CD4-positive, alpha-beta T cell (primary cell): ENCODE measurements at regions of chr17 and their contacts with region 1.

Region 1: GRCh38 chr17:67376737-67377487 is at the start of gene PITPNC1:
- DNase-seq: peak; percentile 77 to 95 (median 84)
- ATAC-seq: peak; percentile 71
- H3K4me3 ChIP-seq: peak within 1 kb of the TSS; percentile 99
- H3K4me3 Mint-ChIP-seq: peak within 1 kb of the TSS; percentile 97
- H3K27ac ChIP-seq: peak within 1 kb of the TSS; percentile 76 to 95
- H3K27ac Mint-ChIP-seq: peak within 1 kb of the TSS; percentile 86
- H3K4me1 ChIP-seq: peaks cover 49% of the 10 kb centered on the region
- H3K4me1 Mint-ChIP-seq: peaks cover 41% of the 10 kb centered on the region
- H3K27me3 ChIP-seq: no peaks in the 10 kb centered on the region
- H3K27me3 Mint-ChIP-seq: no peaks in the 10 kb centered on the region
- CTCF ChIP-seq: no peak
- total RNA-seq, gene PITPNC1: 80.2 to 83.4 TPM

Region 2: GRCh38 chr17:67289181-67289876 is 87.6 kb before region 1 on chr17:
- CTCF ChIA-PET with region 1: no interaction called
- POLR2A ChIA-PET with region 1: no interaction called
- intact Hi-C with region 1: no loop called
- DNase-seq: no peak
- ATAC-seq: no peak
- H3K4me3 ChIP-seq: no peak overlapping the region
- H3K4me3 Mint-ChIP-seq: no peak overlapping the region
- H3K27ac ChIP-seq: no peak overlapping the region
- H3K27ac Mint-ChIP-seq: no peak overlapping the region
- H3K4me1 ChIP-seq: peaks cover 10% of the 10 kb centered on the region
- H3K4me1 Mint-ChIP-seq: no peaks in the 10 kb centered on the region
- H3K27me3 ChIP-seq: no peaks in the 10 kb centered on the region
- H3K27me3 Mint-ChIP-seq: no peaks in the 10 kb centered on the region
- CTCF ChIP-seq: no peak

Region 3: GRCh38 chr17:67322042-67322787 is 54.7 kb before region 1 on chr17:
- CTCF ChIA-PET with region 1: no interaction called
- POLR2A ChIA-PET with region 1: no interaction called
- intact Hi-C with region 1: no loop called
- DNase-seq: no peak
- ATAC-seq: no peak
- H3K4me3 ChIP-seq: no peak overlapping the region
- H3K4me3 Mint-ChIP-seq: no peak overlapping the region
- H3K27ac ChIP-seq: no peak overlapping the region
- H3K27ac Mint-ChIP-seq: no peak overlapping the region
- H3K4me1 ChIP-seq: no peaks in the 10 kb centered on the region
- H3K4me1 Mint-ChIP-seq: no peaks in the 10 kb centered on the region
- H3K27me3 ChIP-seq: no peaks in the 10 kb centered on the region
- H3K27me3 Mint-ChIP-seq: no peaks in the 10 kb centered on the region
- CTCF ChIP-seq: no peak

Region 4: GRCh38 chr17:67390646-67391384 is 13.9 kb after region 1 on chr17:
- CTCF ChIA-PET with region 1: interaction called, 16 read pairs
- POLR2A ChIA-PET with region 1: interaction called, 25 read pairs
- intact Hi-C with region 1: loop called in 1 of 2 experiments (anchors 1 kb)
- DNase-seq: peak; percentile 39 to 83 (median 60)
- ATAC-seq: peak; percentile 82
- H3K4me3 ChIP-seq: peak overlapping the region; percentile 20
- H3K4me3 Mint-ChIP-seq: peak overlapping the region; percentile 86
- H3K27ac ChIP-seq: peak overlapping the region; percentile 50 to 55
- H3K27ac Mint-ChIP-seq: peak overlapping the region; percentile 92
- H3K4me1 ChIP-seq: peaks cover 56% of the 10 kb centered on the region
- H3K4me1 Mint-ChIP-seq: peaks cover 78% of the 10 kb centered on the region
- H3K27me3 ChIP-seq: no peaks in the 10 kb centered on the region
- H3K27me3 Mint-ChIP-seq: no peaks in the 10 kb centered on the region
- CTCF ChIP-seq: no peak

Region 5: GRCh38 chr17:67431249-67432048 is 54.5 kb after region 1 on chr17:
- CTCF ChIA-PET with region 1: interaction called, 23 read pairs
- POLR2A ChIA-PET with region 1: interaction called, 39 read pairs
- intact Hi-C with region 1: loop called (anchors 2 to 5 kb)
- DNase-seq: peak in 3 of 14 experiments; percentile 41 to 56 (median 45)
- ATAC-seq: peak; percentile 5
- H3K4me3 ChIP-seq: no peak overlapping the region
- H3K4me3 Mint-ChIP-seq: peak overlapping the region; percentile 8
- H3K27ac ChIP-seq: no peak overlapping the region
- H3K27ac Mint-ChIP-seq: peak overlapping the region; percentile 91
- H3K4me1 ChIP-seq: peaks cover 59% of the 10 kb centered on the region
- H3K4me1 Mint-ChIP-seq: peaks cover 82% of the 10 kb centered on the region
- H3K27me3 ChIP-seq: no peaks in the 10 kb centered on the region
- H3K27me3 Mint-ChIP-seq: no peaks in the 10 kb centered on the region
- CTCF ChIP-seq: no peak

Region 6: DNA sequence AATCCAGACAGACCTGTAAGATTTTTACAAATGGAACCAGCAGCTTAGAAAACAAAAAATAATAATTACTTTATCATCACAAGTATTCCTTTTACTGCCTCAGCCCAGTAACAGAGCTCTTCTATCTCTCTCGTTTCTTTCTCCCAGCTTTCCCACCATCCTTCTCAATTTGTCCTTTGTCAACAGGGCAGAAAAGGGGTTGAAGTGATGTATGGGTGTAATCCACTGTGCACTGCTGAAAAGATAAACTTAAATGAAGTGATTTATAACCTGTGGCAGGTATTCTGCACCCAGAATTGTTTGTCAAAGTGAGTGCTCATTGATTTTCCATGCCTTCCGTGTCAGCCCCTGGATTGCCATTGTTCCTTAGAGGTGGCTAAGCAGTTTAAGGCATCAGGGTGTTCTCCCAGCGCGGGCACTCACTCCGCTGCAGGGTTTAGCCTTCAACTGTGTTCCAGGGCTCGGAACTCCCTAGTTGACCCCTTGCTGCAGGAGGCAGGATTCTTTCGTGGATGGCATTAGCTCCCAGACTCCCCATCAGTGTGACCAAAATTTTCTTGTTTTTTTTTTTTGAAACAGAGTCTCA is 83.1 kb after region 1 on chr17:
- CTCF ChIA-PET with region 1: interaction called, 8 read pairs
- POLR2A ChIA-PET with region 1: interaction called, 15 read pairs
- intact Hi-C with region 1: no loop called
- DNase-seq: no peak
- ATAC-seq: no peak
- H3K4me3 ChIP-seq: no peak overlapping the region
- H3K4me3 Mint-ChIP-seq: no peak overlapping the region
- H3K27ac ChIP-seq: no peak overlapping the region
- H3K27ac Mint-ChIP-seq: peak overlapping the region; percentile 60
- H3K4me1 ChIP-seq: peaks cover 55% of the 10 kb centered on the region
- H3K4me1 Mint-ChIP-seq: peaks cover 74% of the 10 kb centered on the region
- H3K27me3 ChIP-seq: no peaks in the 10 kb centered on the region
- H3K27me3 Mint-ChIP-seq: no peaks in the 10 kb centered on the region
- CTCF ChIP-seq: no peak

Region 7: DNA sequence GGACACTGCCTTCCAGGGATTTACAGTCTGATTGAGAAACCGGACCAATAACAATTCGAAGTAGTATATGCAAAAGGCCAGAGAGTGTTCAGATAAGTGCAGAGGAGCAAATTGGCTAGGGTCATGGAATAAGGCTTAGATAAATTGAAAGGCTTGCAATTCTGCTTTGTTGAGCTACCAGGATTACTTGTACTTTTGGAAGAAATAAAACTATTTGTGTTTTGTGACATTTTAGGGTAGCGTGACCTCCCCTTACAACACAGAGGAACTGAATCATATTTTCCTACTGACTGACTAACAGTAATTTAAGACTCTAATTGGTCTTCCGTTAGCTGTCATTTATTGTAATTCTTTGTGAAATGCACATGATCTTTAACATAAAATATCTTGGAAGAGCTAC is 104.9 kb after region 1 on chr17:
- CTCF ChIA-PET with region 1: interaction called, 187 read pairs
- POLR2A ChIA-PET with region 1: interaction called, 122 read pairs
- intact Hi-C with region 1: no loop called
- DNase-seq: peak in 1 of 14 experiments; percentile 42
- ATAC-seq: no peak
- H3K4me3 ChIP-seq: no peak overlapping the region
- H3K4me3 Mint-ChIP-seq: no peak overlapping the region
- H3K27ac ChIP-seq: no peak overlapping the region
- H3K27ac Mint-ChIP-seq: peak overlapping the region; percentile 79
- H3K4me1 ChIP-seq: peaks cover 41% of the 10 kb centered on the region
- H3K4me1 Mint-ChIP-seq: peaks cover 89% of the 10 kb centered on the region
- H3K27me3 ChIP-seq: no peaks in the 10 kb centered on the region
- H3K27me3 Mint-ChIP-seq: no peaks in the 10 kb centered on the region
- CTCF ChIP-seq: no peak

Region 8: DNA sequence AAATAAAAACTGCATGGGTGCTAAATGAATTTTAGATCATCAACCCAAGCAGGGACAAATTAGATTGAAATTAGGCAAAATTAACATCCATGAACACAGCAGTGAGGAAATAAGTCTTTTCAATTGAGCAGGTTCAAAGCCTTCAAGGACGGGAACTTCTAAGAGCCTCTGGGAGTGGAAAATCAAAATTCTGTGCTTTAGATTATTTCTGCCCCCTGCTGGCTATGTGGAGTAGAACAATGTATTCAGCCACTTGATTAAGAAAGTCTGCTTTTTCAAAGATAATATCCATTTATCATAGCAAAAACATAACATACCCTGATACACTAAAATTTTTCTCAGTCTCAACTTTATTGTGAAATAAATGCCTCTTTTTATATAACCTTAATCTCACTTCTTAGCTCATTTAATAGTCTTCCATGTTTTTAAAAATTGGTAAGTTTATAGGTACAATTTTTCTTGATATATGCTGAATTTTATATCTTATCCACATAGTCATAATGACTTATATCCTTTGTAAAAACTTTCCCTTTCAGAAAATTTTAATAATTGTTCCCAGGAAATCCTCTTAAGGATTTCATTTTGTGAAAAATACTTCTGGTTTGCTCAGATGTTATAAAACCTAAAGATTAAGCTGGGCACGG is 312.7 kb after region 1 on chr17:
- CTCF ChIA-PET with region 1: interaction called, 10 read pairs
- POLR2A ChIA-PET with region 1: interaction called, 3 read pairs
- intact Hi-C with region 1: loop called (anchors 1 kb)
- DNase-seq: peak in 10 of 14 experiments; percentile 10 to 77 (median 32)
- ATAC-seq: peak; percentile 67
- H3K4me3 ChIP-seq: no peak overlapping the region
- H3K4me3 Mint-ChIP-seq: no peak overlapping the region
- H3K27ac ChIP-seq: no peak overlapping the region
- H3K27ac Mint-ChIP-seq: no peak overlapping the region
- H3K4me1 ChIP-seq: no peaks in the 10 kb centered on the region
- H3K4me1 Mint-ChIP-seq: peaks cover 6% of the 10 kb centered on the region
- H3K27me3 ChIP-seq: no peaks in the 10 kb centered on the region
- H3K27me3 Mint-ChIP-seq: no peaks in the 10 kb centered on the region
- CTCF ChIP-seq: peak; percentile 84

Region 9: DNA sequence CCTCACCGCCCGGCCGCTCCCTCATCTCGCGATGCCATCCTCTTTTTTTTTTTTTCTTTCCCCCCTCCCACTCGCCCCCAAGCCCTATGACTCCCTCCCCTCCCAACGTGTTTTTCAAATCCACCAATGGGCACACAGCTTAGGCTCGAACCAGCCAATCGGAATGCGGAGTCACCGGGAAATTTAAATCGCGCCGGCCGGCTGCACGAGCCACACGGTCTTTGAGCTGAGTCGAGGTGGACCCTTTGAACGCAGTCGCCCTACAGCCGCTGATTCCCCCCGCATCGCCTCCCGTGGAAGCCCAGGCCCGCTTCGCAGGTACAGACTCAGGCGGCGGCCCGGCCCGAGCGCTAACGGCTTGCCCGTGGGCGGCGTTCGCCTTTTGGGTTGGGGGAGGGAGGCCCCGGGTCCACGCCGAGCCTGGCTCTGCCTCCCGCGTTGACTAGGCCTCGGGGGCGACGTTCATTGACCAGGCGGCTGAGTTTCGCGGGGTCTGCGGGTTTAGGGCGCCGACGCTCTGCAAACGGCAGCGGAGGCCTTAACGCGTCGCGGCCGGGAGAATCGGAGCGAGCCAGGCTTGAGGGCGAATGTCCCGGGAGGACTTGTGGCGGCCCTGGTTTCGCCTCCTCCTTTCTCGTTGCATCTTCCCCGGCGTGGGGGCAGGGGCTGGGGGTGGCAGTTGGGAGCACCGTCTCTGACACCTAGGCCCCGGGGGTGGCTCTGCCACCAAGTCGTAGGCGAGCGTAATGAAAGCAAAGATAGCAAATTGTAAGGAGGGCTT is 658.8 kb after region 1 on chr17 and contains the start of gene KPNA2:
- CTCF ChIA-PET with region 1: no interaction called
- POLR2A ChIA-PET with region 1: no interaction called
- intact Hi-C with region 1: loop called in 1 of 2 experiments (anchors 10 kb)
- DNase-seq: peak; percentile 77 to 97 (median 87)
- ATAC-seq: peak; percentile 83
- H3K4me3 ChIP-seq: peak within 1 kb of the TSS; percentile 90
- H3K4me3 Mint-ChIP-seq: peak within 1 kb of the TSS; percentile 98
- H3K27ac ChIP-seq: peak within 1 kb of the TSS; percentile 75 to 79
- H3K27ac Mint-ChIP-seq: peak within 1 kb of the TSS; percentile 93
- H3K4me1 ChIP-seq: peaks cover 7% of the 10 kb centered on the region
- H3K4me1 Mint-ChIP-seq: peaks cover 17% of the 10 kb centered on the region
- H3K27me3 ChIP-seq: no peaks in the 10 kb centered on the region
- H3K27me3 Mint-ChIP-seq: no peaks in the 10 kb centered on the region
- CTCF ChIP-seq: no peak
- total RNA-seq, gene KPNA2: 64.4 to 65.9 TPM